Mammary epithelial cell (primary cell): ENCODE measurements at regions of chr1 and their contacts with region 1.

Region 1: GRCh38 chr1:209207701-209208286 is 375.7 kb upstream of the CAMK1G start:
- DNase-seq: peak; percentile 44
- H3K4me3 ChIP-seq: peak overlapping the region; percentile 28 to 46 (median 36)
- H3K27ac ChIP-seq: no peak overlapping the region
- H3K4me1 ChIP-seq: peaks cover 12% of the 10 kb centered on the region
- H3K27me3 ChIP-seq: no peaks in the 10 kb centered on the region
- CTCF ChIP-seq: peak; percentile 59 to 92

Region 2: GRCh38 chr1:208024406-208024805 is 1183.4 kb before region 1 on chr1:
- CTCF ChIA-PET with region 1: no interaction called
- dilution Hi-C with region 1: no loop called
- in situ Hi-C with region 1: no loop called
- intact Hi-C with region 1: loop called (anchors 5 kb)
- DNase-seq: no peak
- H3K4me3 ChIP-seq: no peak overlapping the region
- H3K27ac ChIP-seq: no peak overlapping the region
- H3K4me1 ChIP-seq: no peaks in the 10 kb centered on the region
- H3K27me3 ChIP-seq: no peaks in the 10 kb centered on the region
- CTCF ChIP-seq: no peak

Region 3: GRCh38 chr1:209248649-209249279 is 41.0 kb after region 1 on chr1:
- CTCF ChIA-PET with region 1: interaction called, 10 read pairs
- dilution Hi-C with region 1: loop called (anchors 5 kb)
- in situ Hi-C with region 1: no loop called
- intact Hi-C with region 1: loop called (anchors 1 kb)
- DNase-seq: peak; percentile 56
- H3K4me3 ChIP-seq: no peak overlapping the region
- H3K27ac ChIP-seq: no peak overlapping the region
- H3K4me1 ChIP-seq: peaks cover 13% of the 10 kb centered on the region
- H3K27me3 ChIP-seq: no peaks in the 10 kb centered on the region
- CTCF ChIP-seq: peak; percentile 92 to 95

Region 4: DNA sequence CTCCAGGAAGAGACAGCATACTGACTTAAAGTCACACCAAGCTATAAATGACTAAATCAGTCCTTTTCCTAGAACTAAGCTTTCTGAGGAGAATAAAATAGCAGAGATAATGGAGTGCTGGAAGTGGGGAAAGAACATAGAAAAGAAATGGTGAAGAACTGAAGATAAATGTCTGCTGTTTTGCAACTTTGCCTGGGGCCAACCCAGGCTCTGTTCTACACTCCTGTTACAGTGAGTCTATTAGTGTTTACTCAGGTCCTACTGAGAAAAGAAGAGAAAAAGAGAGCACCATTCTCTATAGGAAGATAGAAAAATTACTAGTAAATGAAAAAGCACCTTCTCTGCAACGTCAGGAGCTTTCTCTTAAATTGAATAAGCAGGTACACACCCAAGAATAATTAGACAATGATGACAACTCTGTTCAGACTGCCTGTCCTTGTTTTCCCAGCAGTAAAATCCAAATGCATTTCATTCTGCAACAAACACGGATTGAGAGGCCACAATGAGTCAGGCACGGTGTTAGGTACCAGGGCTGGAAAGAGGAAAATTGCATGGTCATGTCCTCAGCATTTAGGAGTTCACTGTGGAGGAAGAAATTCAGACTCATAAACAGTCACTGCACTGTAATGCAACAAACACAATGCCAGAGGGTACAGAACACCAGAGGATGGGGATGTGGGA is 236.3 kb after region 1 on chr1:
- CTCF ChIA-PET with region 1: no interaction called
- dilution Hi-C with region 1: no loop called
- in situ Hi-C with region 1: loop called (anchors 10 kb)
- intact Hi-C with region 1: no loop called
- DNase-seq: peak; percentile 36
- H3K4me3 ChIP-seq: no peak overlapping the region
- H3K27ac ChIP-seq: no peak overlapping the region
- H3K4me1 ChIP-seq: peaks cover 2% of the 10 kb centered on the region
- H3K27me3 ChIP-seq: no peaks in the 10 kb centered on the region
- CTCF ChIP-seq: no peak

Region 5: DNA sequence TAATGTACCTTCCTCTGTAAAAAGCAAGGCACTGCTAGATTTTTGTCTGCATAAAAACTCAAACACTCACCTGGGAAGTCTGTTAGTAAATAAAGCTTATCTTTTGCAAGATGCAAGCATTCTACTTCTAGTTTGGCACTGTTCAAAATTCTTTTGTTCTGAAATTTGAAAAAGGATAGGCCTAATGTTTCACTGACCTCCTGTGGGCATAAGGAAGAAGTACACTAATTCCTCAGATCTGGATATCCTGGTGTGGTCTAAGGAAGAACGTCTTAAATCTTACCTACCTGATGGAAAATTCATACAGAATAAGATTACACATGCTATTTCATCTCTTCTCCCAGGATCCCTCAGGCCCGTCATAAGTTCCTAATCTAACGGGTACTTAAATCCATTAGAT is 282.2 kb after region 1 on chr1:
- CTCF ChIA-PET with region 1: interaction called, 4 read pairs
- dilution Hi-C with region 1: no loop called
- in situ Hi-C with region 1: no loop called
- intact Hi-C with region 1: loop called (anchors 1 kb)
- DNase-seq: peak; percentile 26
- H3K4me3 ChIP-seq: no peak overlapping the region
- H3K27ac ChIP-seq: no peak overlapping the region
- H3K4me1 ChIP-seq: peaks cover 26% of the 10 kb centered on the region
- H3K27me3 ChIP-seq: no peaks in the 10 kb centered on the region
- CTCF ChIP-seq: peak; percentile 74 to 77

Region 6: DNA sequence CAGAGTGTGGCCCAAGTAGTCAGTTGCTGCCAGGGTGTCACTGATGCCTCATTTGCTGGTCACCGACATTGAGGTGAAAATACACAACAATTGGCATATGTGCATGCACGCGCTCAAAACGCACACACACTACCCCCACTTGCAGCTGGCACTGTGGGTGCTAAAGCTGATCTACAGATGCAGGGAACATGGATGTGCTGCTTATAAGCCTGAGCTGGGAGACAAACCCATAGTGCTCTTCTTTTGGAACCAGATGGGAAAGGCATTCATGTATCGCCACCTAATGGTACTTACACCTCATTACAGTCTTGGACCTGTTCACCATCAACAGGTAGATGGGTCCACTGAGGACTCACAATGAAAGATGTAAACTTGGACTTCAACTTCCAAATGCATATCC is 305.4 kb after region 1 on chr1:
- CTCF ChIA-PET with region 1: no interaction called
- dilution Hi-C with region 1: no loop called
- in situ Hi-C with region 1: no loop called
- intact Hi-C with region 1: loop called (anchors 2 kb)
- DNase-seq: peak; percentile 55
- H3K4me3 ChIP-seq: no peak overlapping the region
- H3K27ac ChIP-seq: no peak overlapping the region
- H3K4me1 ChIP-seq: no peaks in the 10 kb centered on the region
- H3K27me3 ChIP-seq: no peaks in the 10 kb centered on the region
- CTCF ChIP-seq: peak; percentile 80 to 85